CD14-positive monocyte (primary cell): ENCODE measurements at regions of chr22 and their contacts with region 1.

Region 1: DNA sequence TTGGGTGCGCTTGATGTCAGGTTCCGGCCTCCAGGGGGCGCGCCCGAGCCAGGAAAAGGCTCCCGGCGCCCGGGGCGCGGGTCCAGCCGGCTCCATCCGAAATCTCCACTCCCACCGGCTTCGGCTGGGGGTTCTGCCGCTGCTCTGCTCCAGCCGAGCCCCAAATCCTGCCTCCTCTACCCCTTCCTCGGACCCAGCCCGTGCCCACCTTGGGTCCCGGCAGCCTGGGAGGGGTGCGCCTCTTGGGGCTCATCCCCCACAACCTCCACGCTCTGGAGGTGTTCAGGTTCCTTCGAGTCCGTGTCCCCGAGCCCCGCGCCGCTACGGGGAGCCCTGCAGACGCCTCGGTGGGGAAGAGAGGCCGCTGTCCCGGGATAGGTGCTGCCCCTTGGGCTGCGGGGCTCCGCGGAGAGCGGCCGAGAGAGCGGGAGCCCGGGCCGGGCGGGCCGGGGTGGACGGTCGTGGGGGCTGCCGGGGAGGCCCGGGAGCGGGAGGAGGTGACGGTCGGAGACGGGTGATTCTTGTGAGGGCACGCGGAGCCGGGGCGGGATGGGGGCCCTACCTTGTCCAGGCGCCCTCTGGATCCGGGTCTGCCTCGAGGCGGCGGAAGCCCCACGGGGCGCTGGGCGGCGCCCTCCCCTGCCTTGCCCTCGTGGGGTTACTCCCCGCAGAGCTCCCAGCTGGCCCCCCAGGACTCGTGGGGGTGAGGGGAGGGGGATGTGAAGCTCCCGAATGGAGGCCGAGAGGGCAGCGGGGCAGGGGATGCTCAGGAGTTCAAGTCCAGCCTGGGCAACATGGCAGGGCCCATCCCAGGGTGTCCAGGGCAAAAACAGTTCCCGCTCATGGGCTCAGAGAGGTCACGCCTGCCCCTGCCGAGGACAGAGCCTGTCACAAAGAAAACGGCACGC is 13.2 kb upstream of the CYB5R3 start:
- DNase-seq: peak; percentile 53 to 67 (median 66)
- H3K4me3 ChIP-seq: peak overlapping the region; percentile 13 to 74 (median 35)
- H3K4me3 Mint-ChIP-seq: peak overlapping the region; percentile 70 to 82
- H3K27ac ChIP-seq: no peak overlapping the region
- H3K27ac Mint-ChIP-seq: no peak overlapping the region
- H3K4me1 ChIP-seq: peaks cover 12 to 18% of the 10 kb centered on the region in 2 donors
- H3K4me1 Mint-ChIP-seq: peaks cover 14% of the 10 kb centered on the region
- H3K27me3 ChIP-seq: peaks cover 4 to 12% of the 10 kb centered on the region in 2 donors
- H3K27me3 Mint-ChIP-seq: peaks cover 20 to 25% (median 22%) of the 10 kb centered on the region in 3 donors
- CTCF ChIP-seq: peak; percentile 83

Region 2: GRCh38 chr22:42236268-42236667 is 426.1 kb before region 1 on chr22:
- intact Hi-C with region 1: no loop called
- DNase-seq: no peak
- H3K4me3 ChIP-seq: no peak overlapping the region
- H3K4me3 Mint-ChIP-seq: no peak overlapping the region
- H3K27ac ChIP-seq: no peak overlapping the region
- H3K27ac Mint-ChIP-seq: peak overlapping the region in 1 of 7 donors; percentile 9
- H3K4me1 ChIP-seq: no peaks in the 10 kb centered on the region
- H3K4me1 Mint-ChIP-seq: peaks cover 8% of the 10 kb centered on the region
- H3K27me3 ChIP-seq: no peaks in the 10 kb centered on the region
- H3K27me3 Mint-ChIP-seq: no peaks in the 10 kb centered on the region
- CTCF ChIP-seq: no peak

Region 3: GRCh38 chr22:42437488-42438292 is 224.7 kb before region 1 on chr22:
- intact Hi-C with region 1: no loop called
- DNase-seq: peak; percentile 73 to 83 (median 82)
- H3K4me3 ChIP-seq: peak overlapping the region; percentile 22 to 79 (median 57)
- H3K4me3 Mint-ChIP-seq: peak overlapping the region; percentile 74 to 88
- H3K27ac ChIP-seq: peak overlapping the region; percentile 22 to 82
- H3K27ac Mint-ChIP-seq: peak overlapping the region; percentile 68 to 97 (median 90)
- H3K4me1 ChIP-seq: peaks cover 88 to 93% of the 10 kb centered on the region in 2 donors
- H3K4me1 Mint-ChIP-seq: peaks cover 82% of the 10 kb centered on the region
- H3K27me3 ChIP-seq: no peaks in the 10 kb centered on the region
- H3K27me3 Mint-ChIP-seq: peaks cover 0 to 13% (median 3%) of the 10 kb centered on the region in 3 donors
- CTCF ChIP-seq: peak; percentile 100

Region 4: GRCh38 chr22:42732081-42732480 is 69.7 kb after region 1 on chr22:
- intact Hi-C with region 1: loop called in 1 of 2 experiments (anchors 10 kb)
- DNase-seq: no peak
- H3K4me3 ChIP-seq: no peak overlapping the region
- H3K4me3 Mint-ChIP-seq: no peak overlapping the region
- H3K27ac ChIP-seq: no peak overlapping the region
- H3K27ac Mint-ChIP-seq: peak overlapping the region in 2 of 7 donors; percentile 0 to 57
- H3K4me1 ChIP-seq: peaks cover 4% of the 10 kb centered on the region in 2 donors
- H3K4me1 Mint-ChIP-seq: peaks cover 11% of the 10 kb centered on the region
- H3K27me3 ChIP-seq: no peaks in the 10 kb centered on the region
- H3K27me3 Mint-ChIP-seq: peaks cover 7 to 16% (median 8%) of the 10 kb centered on the region in 3 donors
- CTCF ChIP-seq: no peak

Region 5: DNA sequence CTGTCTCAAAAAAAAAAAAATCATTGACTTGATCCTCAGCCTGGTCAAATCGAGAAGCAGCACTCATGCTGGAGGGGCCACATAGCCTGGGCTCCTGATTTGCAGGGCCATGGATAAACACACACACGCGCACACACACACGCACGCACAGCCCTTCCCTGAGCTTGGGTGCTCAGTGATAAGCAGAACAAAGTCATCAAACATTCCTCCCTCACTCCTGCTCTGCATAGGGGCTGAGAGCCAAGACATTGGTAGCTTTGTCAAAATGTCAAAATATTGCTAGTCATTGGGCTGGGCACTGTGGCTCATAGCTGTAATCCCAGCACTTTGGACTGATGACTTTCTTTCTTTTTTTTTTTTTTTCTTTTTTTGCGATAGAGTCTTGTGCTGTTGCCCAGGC is 92.3 kb after region 1 on chr22:
- intact Hi-C with region 1: loop called in 1 of 2 experiments (anchors 5 kb)
- DNase-seq: peak in 1 of 3 donors; percentile 32
- H3K4me3 ChIP-seq: no peak overlapping the region
- H3K4me3 Mint-ChIP-seq: no peak overlapping the region
- H3K27ac ChIP-seq: no peak overlapping the region
- H3K27ac Mint-ChIP-seq: peak overlapping the region in 6 of 7 donors; percentile 33 to 92 (median 84)
- H3K4me1 ChIP-seq: peaks cover 16 to 41% of the 10 kb centered on the region in 2 donors
- H3K4me1 Mint-ChIP-seq: peaks cover 63% of the 10 kb centered on the region
- H3K27me3 ChIP-seq: no peaks in the 10 kb centered on the region
- H3K27me3 Mint-ChIP-seq: peaks cover 4 to 9% (median 8%) of the 10 kb centered on the region in 3 donors
- CTCF ChIP-seq: no peak

Region 6: DNA sequence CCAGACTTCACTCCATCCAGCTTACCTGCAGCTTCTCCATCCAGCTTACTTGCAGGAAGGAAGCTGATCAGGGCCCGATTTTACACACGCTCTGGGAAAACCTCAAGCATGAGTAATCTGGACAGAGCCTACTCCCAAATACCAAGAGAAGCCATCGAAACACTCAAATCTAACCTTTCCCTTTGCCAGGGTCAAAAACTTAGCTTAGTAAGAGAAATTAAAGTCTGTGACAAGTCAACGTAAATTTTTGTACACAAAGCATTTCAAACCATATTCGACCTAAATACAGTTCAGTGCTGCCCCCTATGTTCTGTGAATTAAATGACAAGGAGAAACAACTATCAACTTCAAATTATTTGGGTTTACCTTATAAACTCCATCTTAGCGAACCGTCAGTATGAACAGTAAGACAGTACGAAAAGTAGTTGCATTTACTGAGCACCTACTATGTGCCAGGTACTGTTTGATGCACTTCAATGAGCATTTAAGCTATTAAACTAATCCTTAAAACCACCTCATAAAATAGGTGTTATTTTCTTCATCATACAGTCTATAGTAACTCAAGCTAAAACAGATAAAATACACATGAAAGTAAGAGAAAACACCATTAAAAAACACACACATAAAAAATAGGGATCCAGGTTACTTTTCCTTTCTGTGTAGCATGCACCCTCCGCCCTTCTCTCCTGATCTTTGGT is 157.8 kb after region 1 on chr22:
- intact Hi-C with region 1: loop called in 1 of 2 experiments (anchors 5 kb)
- DNase-seq: peak in 2 of 3 donors; percentile 7 to 18
- H3K4me3 ChIP-seq: no peak overlapping the region
- H3K4me3 Mint-ChIP-seq: peak overlapping the region in 1 of 2 donors; percentile 30
- H3K27ac ChIP-seq: no peak overlapping the region
- H3K27ac Mint-ChIP-seq: peak overlapping the region in 1 of 7 donors; percentile 46
- H3K4me1 ChIP-seq: no peaks in the 10 kb centered on the region
- H3K4me1 Mint-ChIP-seq: peaks cover 3% of the 10 kb centered on the region
- H3K27me3 ChIP-seq: no peaks in the 10 kb centered on the region
- H3K27me3 Mint-ChIP-seq: peaks cover 0 to 2% (median 0%) of the 10 kb centered on the region in 3 donors
- CTCF ChIP-seq: peak; percentile 54